Astrocyte of the cerebellum (primary cell): ENCODE measurements at regions of chr3 and their contacts with region 1.

Region 1: GRCh38 chr3:197482001-197482400 is 73.8 kb downstream of the BDH1 start:
- DNase-seq: no peak
- H3K4me3 ChIP-seq: no peak overlapping the region
- CTCF ChIP-seq: no peak

Region 2: DNA sequence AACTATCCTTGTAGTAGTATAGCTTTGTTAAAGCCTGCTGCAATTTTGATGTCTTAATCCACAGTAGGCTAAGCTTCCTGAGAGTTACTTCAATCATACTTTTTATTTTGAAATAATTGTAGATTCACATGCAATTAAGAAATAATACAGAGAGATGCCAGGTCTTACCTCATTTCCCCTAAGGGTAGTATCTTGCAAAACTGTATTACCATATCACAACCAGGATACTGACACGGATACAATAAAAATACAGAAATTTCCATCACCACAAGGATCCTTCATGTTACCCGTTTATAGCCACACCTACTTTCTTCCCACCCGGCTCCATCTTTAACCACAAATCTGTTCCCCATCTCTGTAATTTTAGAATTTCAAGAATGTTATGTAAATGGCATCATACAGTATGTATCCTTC is 51.9 kb after region 1 on chr3:
- in situ Hi-C with region 1: loop called (anchors 5 kb)
- DNase-seq: no peak
- H3K4me3 ChIP-seq: no peak overlapping the region
- CTCF ChIP-seq: no peak

Region 3: GRCh38 chr3:197736491-197737318 is 254.7 kb after region 1 on chr3 and contains the start of gene RUBCN:
- in situ Hi-C with region 1: no loop called
- DNase-seq: peak; percentile 83
- H3K4me3 ChIP-seq: peak within 1 kb of the TSS; percentile 85
- CTCF ChIP-seq: no peak